Panc1 (cell line): ENCODE measurements at regions of chr11 and their contacts with region 1.

Region 1: DNA sequence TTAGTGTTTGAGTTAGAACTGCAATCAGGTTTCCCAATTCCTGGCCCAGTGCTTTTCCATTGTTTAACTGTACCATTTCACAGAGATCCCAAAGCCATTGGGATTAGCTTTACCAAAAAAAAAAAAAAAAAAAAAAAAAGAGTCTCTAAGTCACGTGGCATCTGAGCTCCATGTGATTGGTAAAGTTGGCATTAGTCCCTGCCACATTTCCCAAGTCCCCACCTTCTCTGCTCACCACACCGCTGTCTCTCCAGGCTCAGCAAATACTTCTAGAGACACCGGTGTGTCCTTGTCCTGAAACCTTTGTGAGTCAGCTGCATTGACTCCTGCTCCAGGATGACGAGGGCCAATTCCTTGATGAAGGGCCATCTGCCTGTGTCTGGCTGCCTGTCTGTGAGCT is 305.3 kb downstream of the KIRREL3 start:
- DNase-seq: no peak
- ATAC-seq: 0 out of 2 replicates have a peak, but pooled peaks have one; percentile 30
- H3K4me3 ChIP-seq: no peak overlapping the region
- H3K27ac ChIP-seq: no peak overlapping the region
- H3K4me1 ChIP-seq: no peaks in the 10 kb centered on the region
- H3K27me3 ChIP-seq: peaks cover 7% of the 10 kb centered on the region
- CTCF ChIP-seq: no peak

Region 2: GRCh38 chr11:126561327-126561893 is 133.9 kb before region 1 on chr11:
- CTCF ChIA-PET with region 1: interaction called, 12 read pairs
- POLR2A ChIA-PET with region 1: no interaction called
- in situ Hi-C with region 1: no loop called
- intact Hi-C with region 1: no loop called
- DNase-seq: no peak
- ATAC-seq: no peak
- H3K4me3 ChIP-seq: no peak overlapping the region
- H3K27ac ChIP-seq: no peak overlapping the region
- H3K4me1 ChIP-seq: no peaks in the 10 kb centered on the region
- H3K27me3 ChIP-seq: peaks cover 14% of the 10 kb centered on the region
- CTCF ChIP-seq: no peak

Region 3: DNA sequence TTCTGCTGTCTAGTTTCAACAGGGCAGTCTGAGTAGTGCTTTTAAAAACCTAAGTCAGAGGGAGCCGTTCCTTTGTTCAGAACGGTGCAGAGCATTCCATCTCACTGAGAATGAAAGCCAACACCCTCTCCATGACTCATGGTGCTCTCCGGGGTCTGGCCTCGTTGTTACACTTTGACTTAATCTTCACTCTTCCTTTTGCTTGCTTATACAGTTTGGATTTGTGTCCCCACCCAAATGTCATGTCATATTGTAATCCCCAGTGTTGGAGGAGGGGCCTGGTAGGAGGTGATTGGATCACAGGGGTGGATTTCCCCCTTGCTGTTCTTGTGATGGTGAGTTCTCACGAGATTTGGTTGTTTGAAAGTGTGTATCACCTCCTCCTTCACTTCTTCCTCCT is 47.6 kb before region 1 on chr11:
- CTCF ChIA-PET with region 1: no interaction called
- POLR2A ChIA-PET with region 1: interaction called, 12 read pairs
- in situ Hi-C with region 1: no loop called
- intact Hi-C with region 1: no loop called
- DNase-seq: no peak
- ATAC-seq: no peak
- H3K4me3 ChIP-seq: no peak overlapping the region
- H3K27ac ChIP-seq: no peak overlapping the region
- H3K4me1 ChIP-seq: no peaks in the 10 kb centered on the region
- H3K27me3 ChIP-seq: peaks cover 6% of the 10 kb centered on the region; the same call in 1 of the 2 replicates
- CTCF ChIP-seq: no peak

Region 4: GRCh38 chr11:127130321-127130720 is 435.0 kb after region 1 on chr11:
- CTCF ChIA-PET with region 1: no interaction called
- POLR2A ChIA-PET with region 1: no interaction called
- in situ Hi-C with region 1: no loop called
- intact Hi-C with region 1: no loop called
- DNase-seq: no peak
- ATAC-seq: no peak
- H3K4me3 ChIP-seq: no peak overlapping the region
- H3K27ac ChIP-seq: no peak overlapping the region
- H3K4me1 ChIP-seq: no peaks in the 10 kb centered on the region
- H3K27me3 ChIP-seq: no peaks in the 10 kb centered on the region; the same call in 1 of the 2 replicates
- CTCF ChIP-seq: no peak